Activated T-helper 2 cell treated with anti-CD3 and anti-CD28 coated beads, Interferon-gamma antibody, Interleukin-2, Interleukin-4, amounts not matched to agents 10 μg/mL and 5 μg/mL and 100 μg/mL, durations not matched to agents 14 hours and 24 hours and 36 hours (primary cell): ENCODE measurements at regions of chr19 and their contacts with region 1.

Region 1: DNA sequence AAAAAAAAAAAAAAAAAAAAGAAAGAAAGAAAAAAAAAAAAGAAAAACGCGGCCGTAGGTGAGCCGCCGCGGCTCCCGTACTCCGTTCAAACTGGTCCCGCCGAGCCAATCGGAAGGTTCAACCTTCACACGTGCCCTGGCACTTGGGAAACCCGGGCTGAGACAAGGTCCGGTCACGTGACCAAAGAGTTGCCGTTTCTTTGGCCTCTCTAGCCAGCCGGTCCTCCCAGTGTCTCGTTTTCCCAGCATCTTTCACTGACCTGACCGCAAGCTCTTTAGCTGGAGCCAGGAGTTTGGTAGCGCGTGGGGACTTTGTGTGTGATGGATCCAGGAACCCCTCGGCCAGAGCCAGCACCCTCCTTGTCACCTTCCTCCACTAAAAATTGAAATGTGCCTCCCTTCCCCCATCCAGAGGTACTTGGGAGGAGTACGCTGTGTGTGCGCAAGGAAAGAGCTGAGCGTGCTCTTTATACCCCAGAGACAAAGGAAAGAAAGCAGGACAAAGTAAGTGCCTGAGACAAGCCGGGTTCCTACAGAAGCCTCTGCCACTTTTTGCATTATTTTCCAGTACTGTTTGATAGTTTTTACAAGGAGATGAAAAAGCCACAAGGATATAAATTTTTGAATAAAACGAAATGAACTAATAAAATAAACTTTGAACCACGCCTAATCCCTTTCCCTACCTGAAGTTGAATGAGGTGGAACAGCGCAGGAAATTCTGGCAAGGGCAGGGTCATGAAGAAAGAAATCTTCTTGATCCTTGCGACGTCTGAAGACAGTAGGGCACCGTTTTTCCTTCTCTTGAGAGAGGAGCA is 959 bp downstream of the TNPO2 start:
- DNase-seq: peak; percentile 92
- H3K4me3 Mint-ChIP-seq: peak overlapping the region; percentile 92
- H3K27ac Mint-ChIP-seq: peak overlapping the region; percentile 90
- H3K4me1 Mint-ChIP-seq: peaks cover 17% of the 10 kb centered on the region
- H3K27me3 Mint-ChIP-seq: no peaks in the 10 kb centered on the region

Region 2: DNA sequence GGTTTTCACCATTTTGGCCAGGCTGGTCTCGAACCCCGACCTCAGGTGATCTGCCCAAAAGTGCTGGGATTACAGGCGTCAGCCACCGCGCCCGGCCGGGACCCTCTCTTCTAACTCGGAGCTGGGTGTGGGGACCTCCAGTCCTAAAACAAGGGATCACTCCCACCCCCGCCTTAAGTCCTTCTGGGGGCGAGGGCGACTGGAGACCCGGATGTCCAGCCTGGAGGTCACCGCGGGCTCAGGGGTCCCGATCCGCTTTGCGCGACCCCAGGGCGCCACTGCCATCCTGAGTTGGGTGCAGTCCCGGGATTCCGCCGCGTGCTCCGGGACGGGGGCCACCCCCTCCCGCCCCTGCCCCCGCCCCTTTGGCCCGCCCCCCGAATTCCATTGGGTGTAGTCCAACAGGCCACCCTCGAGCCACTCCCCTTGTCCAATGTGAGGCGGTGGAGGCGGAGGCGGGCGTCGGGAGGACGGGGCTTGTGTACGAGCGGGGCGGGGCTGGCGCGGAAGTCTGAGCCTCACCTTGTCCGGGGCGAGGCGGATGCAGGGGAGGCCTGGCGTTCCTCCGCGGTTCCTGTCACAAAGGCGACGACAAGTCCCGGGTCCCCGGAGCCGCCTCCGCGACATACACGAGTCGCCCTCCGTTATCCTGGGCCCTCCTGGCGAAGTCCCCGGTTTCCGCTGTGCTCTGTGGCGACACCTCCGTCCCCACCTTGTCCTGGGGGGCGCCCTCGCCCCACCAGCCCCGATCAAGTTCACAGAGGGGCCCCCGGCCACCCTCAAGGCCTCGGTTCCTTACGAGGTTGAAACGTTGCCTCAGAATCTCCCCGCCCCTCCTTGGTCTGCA is 1632.5 kb before region 1 on chr19:
- intact Hi-C with region 1: loop called (anchors 5 kb)
- DNase-seq: peak; percentile 98
- H3K4me3 Mint-ChIP-seq: peak overlapping the region; percentile 97
- H3K27ac Mint-ChIP-seq: peak overlapping the region; percentile 99
- H3K4me1 Mint-ChIP-seq: peaks cover 40% of the 10 kb centered on the region
- H3K27me3 Mint-ChIP-seq: no peaks in the 10 kb centered on the region

Region 3: DNA sequence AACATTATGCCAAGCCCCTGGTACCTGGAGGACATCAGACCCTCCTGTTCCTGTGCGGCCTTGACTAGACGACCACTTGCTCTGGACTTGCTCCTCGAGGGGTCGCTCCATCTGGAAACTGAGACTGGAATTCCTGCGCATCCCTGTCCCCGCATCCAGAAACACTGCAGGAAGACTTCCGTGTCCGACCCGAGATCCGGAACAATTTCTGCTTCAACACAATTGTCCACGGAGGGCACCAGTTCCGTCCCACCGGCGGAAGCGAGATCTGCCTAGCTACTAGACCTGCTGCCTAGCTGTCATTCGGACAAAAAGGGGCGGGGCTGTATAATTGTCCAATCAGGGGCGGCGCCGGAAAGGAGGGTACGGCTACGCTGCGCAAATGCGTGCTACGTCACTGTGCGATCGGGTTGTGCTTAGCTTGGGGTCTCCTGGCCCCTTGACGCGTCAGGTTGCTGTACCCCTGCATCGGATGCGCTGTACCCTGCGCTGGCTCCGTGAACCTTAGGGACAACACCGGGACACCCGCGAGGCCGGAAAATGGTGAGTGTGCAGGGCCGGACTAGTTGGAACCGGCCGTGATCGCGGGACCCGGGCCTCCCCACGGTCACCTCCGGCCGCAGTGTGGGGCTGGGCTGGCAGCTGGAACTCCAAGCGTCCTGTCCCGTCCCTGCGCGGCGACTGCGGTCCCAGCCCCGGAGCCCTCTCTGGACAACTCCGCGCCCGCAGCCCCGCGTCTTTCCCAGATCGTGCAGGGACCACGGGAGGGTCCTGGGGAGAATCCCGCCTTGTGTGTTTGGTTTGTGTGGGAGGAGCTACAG is 112.0 kb before region 1 on chr19 and contains the starts of genes ZNF490 and ZNF791:
- intact Hi-C with region 1: loop called (anchors 5 kb)
- DNase-seq: peak; percentile 95
- H3K4me3 Mint-ChIP-seq: peak within 1 kb of the TSS; percentile 99
- H3K27ac Mint-ChIP-seq: peak within 1 kb of the TSS; percentile 97
- H3K4me1 Mint-ChIP-seq: peaks cover 18% of the 10 kb centered on the region
- H3K27me3 Mint-ChIP-seq: no peaks in the 10 kb centered on the region
- total RNA-seq, gene ZNF490: 7.0 and 9.9 TPM in 2 replicates
- total RNA-seq, gene ZNF791: 21.8 and 22.5 TPM in 2 replicates

Region 4: GRCh38 chr19:12736995-12737834 is 14.4 kb after region 1 on chr19 and contains the start of gene GET3:
- intact Hi-C with region 1: loop called (anchors 1 kb)
- DNase-seq: peak; percentile 78
- H3K4me3 Mint-ChIP-seq: peak within 1 kb of the TSS; percentile 98
- H3K27ac Mint-ChIP-seq: peak within 1 kb of the TSS; percentile 78
- H3K4me1 Mint-ChIP-seq: peaks cover 27% of the 10 kb centered on the region
- H3K27me3 Mint-ChIP-seq: no peaks in the 10 kb centered on the region
- total RNA-seq, gene GET3: 62.7 and 62.8 TPM in 2 replicates

Region 5: DNA sequence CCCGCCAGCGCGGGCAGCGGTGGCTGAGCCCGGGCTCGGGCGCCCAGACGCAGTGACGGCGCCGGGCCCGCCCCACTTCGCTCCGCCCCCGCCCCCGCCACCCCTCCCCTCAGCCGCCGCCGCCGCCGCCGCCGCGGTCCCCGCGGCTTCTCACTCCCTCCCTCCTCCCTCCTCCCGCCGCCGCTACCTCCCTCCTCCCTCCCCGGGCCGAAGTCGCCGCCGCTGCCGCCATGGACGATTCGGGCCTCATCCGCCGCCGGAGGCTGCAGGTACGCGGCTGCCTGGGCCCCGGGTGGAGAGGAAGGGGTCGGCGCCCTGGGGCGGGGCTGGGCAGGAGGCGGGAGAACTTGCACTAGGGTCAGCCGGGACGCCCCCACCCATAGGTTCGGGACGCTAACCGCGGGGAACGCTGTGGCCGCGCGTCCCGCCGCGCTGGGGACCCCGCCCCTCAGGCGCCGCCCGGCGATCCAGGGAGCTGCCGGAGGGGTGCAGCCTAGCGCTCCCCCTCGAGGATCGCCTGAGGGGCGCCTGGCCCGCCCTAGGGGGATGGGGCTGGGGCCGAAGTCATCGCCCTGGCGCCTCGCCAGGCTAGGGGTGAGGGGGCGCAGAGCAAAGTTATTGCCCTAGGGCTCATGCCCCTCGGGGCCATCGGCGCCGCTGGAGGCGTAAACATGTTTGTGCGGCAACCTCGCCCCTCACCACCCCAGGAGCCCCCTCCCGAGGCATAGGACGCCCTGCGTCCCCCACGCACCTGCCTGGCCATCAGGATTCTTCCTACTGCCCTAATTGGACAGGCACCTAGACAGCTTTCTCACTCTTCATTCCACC is 111.2 kb after region 1 on chr19:
- intact Hi-C with region 1: no loop called
- DNase-seq: no peak
- H3K4me3 Mint-ChIP-seq: peak overlapping the region; percentile 3
- H3K27ac Mint-ChIP-seq: no peak overlapping the region
- H3K4me1 Mint-ChIP-seq: peaks cover 20% of the 10 kb centered on the region
- H3K27me3 Mint-ChIP-seq: peaks cover 59% of the 10 kb centered on the region